Aorta (tissue), 5 donors: ENCODE measurements at regions of chr3 and their contacts with region 1.

Region 1: GRCh38 chr3:129596194-129597086 is 10.0 kb downstream of the PLXND1 start:
- DNase-seq: peak; percentile 94 to 96
- ATAC-seq: peak; percentile 88
- H3K4me3 ChIP-seq: no peak overlapping the region
- H3K27ac ChIP-seq: peak overlapping the region; percentile 6 to 79
- H3K4me1 ChIP-seq: no peaks in the 10 kb centered on the region
- H3K27me3 ChIP-seq: no peaks in the 10 kb centered on the region

Region 2: GRCh38 chr3:129650256-129650872 is 53.9 kb after region 1 on chr3:
- intact Hi-C with region 1: loop called in 1 of 2 experiments (anchors 2 kb)
- DNase-seq: peak in 1 of 2 donors; percentile 75
- ATAC-seq: peak; percentile 81
- H3K4me3 ChIP-seq: no peak overlapping the region
- H3K27ac ChIP-seq: no peak overlapping the region
- H3K4me1 ChIP-seq: peaks cover 0 to 5% of the 10 kb centered on the region in 2 donors
- H3K27me3 ChIP-seq: no peaks in the 10 kb centered on the region